Astrocyte of the cerebellum (primary cell): ENCODE measurements at regions of chr20 and their contacts with region 1.

Region 1: GRCh38 chr20:50415516-50416113 is 94.6 kb upstream of the PTPN1 start:
- DNase-seq: peak; percentile 79
- H3K4me3 ChIP-seq: no peak overlapping the region
- CTCF ChIP-seq: no peak

Region 2: DNA sequence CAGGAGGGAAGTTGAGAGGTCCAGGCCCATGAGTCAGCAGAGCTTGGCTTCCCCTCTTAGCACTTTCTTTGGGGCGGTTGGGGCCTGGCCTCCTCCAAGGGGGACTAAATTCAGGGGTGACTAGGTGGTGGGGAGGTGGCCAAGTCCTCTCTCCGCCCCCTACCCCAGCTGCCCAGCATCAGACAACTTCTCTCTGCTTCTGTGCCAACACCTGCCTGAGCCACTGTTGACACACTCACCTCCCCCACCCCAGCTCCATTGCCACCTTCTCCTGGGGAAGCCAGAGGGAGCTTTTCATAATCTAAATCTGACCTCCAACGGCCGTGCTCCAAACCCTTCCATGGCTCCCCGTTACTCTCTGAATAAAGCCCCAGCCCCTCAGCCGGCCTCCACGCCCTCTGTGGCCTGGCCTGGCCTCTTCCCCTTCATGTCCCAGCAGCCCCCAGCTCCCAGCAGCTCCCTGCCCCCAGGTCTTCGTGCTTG is 154.8 kb before region 1 on chr20:
- in situ Hi-C with region 1: loop called (anchors 5 kb)
- DNase-seq: no peak
- H3K4me3 ChIP-seq: no peak overlapping the region
- CTCF ChIP-seq: no peak

Region 3: GRCh38 chr20:50286609-50287008 is 129.0 kb before region 1 on chr20:
- in situ Hi-C with region 1: loop called (anchors 5 kb)
- DNase-seq: peak; percentile 66
- H3K4me3 ChIP-seq: no peak overlapping the region
- CTCF ChIP-seq: no peak

Region 4: GRCh38 chr20:50320910-50321796 is 94.5 kb before region 1 on chr20:
- in situ Hi-C with region 1: loop called (anchors 5 kb)
- DNase-seq: peak; percentile 91
- H3K4me3 ChIP-seq: peak overlapping the region; percentile 34
- CTCF ChIP-seq: no peak

Region 5: GRCh38 chr20:50449738-50450495 is 34.3 kb after region 1 on chr20:
- in situ Hi-C with region 1: loop called (anchors 5 kb)
- DNase-seq: no peak
- H3K4me3 ChIP-seq: no peak overlapping the region
- CTCF ChIP-seq: no peak